MCF 10A (cell line): ENCODE measurements at regions of chr5 and their contacts with region 1.

Region 1: DNA sequence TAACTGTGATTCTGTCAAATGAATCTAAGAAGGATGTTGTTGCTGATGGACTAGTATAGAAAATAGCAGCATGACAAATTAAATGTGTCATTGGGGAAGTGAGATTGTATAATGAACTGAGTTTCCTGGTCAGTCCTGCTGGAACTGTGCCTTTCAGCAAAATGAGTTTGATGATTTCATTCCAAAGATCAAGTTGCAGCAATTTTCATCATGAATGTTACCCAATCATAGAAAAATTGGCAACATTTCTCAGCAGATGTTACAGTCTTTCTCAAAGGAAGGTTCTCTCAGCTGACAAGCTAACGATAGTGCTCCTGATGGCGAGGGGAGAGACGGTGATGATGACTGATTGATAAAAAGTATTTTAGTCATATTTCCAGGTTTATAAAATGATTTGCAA is 10.7 kb downstream of the PCDHAC2 start:
- DNase-seq: peak; percentile 86
- H3K4me3 Mint-ChIP-seq: peak overlapping the region; percentile 32
- H3K27ac Mint-ChIP-seq: peak overlapping the region; percentile 94
- H3K4me1 Mint-ChIP-seq: peaks cover 37% of the 10 kb centered on the region
- H3K27me3 Mint-ChIP-seq: no peaks in the 10 kb centered on the region
- CTCF ChIP-seq: no peak

Region 2: GRCh38 chr5:140710899-140711552 is 266.0 kb before region 1 on chr5:
- CTCF ChIA-PET with region 1: no interaction called
- POLR2A ChIA-PET with region 1: interaction called, 4 read pairs
- intact Hi-C with region 1: loop called (anchors 10 kb)
- DNase-seq: peak; percentile 99
- H3K4me3 Mint-ChIP-seq: peak overlapping the region; percentile 88
- H3K27ac Mint-ChIP-seq: peak overlapping the region; percentile 94
- H3K4me1 Mint-ChIP-seq: peaks cover 5% of the 10 kb centered on the region
- H3K27me3 Mint-ChIP-seq: no peaks in the 10 kb centered on the region
- CTCF ChIP-seq: no peak

Region 3: GRCh38 chr5:140953234-140953633 is 23.8 kb before region 1 on chr5:
- CTCF ChIA-PET with region 1: no interaction called
- POLR2A ChIA-PET with region 1: interaction called, 21 read pairs
- intact Hi-C with region 1: no loop called
- DNase-seq: no peak
- H3K4me3 Mint-ChIP-seq: no peak overlapping the region
- H3K27ac Mint-ChIP-seq: no peak overlapping the region
- H3K4me1 Mint-ChIP-seq: peaks cover 20% of the 10 kb centered on the region
- H3K27me3 Mint-ChIP-seq: no peaks in the 10 kb centered on the region
- CTCF ChIP-seq: no peak

Region 4: DNA sequence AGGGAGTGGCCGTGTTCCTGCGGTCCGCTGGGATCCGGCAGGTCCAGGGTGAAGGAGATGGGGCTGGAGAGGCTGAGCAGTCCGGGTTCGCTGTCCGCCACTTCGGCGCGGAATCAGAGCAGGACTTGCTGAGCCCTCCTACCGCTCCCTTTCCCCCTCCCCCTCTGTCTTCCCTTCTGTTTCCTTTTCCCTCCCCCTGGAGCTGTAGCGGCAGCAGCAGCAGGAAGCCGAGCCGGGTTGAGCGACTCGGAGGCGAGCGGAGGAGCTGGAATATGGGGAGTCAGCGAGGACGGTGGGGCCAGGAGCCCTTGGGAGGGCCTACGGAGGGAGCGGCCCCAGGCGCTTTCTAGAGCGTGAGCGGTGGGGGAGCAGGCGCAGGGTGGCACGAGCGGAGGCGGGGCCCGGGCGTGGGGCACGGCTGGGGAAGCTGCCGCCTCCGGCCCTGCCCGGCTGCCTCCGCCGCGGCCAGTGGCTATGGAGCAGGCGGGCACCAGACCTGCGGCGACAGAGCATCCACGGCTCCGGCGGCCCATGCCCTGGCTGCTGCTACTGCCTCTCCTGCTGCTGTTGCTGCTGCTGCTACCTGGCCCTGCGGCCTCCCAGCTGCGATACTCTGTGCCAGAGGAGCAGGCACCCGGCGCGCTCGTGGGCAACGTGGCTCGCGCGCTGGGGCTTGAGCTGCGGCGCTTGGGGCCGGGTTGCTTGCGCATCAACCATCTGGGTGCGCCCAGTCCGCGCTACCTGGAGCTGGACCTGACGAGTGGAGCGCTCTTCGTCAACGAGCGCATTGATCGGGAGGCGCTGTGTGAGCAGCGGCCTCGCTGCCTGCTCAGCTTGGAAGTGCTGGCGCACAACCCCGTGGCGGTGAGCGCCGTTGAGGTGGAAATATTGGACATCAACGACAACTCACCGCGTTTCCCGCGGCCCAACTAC is 10.4 kb before region 1 on chr5 and contains the start of gene PCDHAC2:
- CTCF ChIA-PET with region 1: interaction called, 4 read pairs
- POLR2A ChIA-PET with region 1: interaction called, 33 read pairs
- intact Hi-C with region 1: loop called (anchors 1 kb)
- DNase-seq: peak; percentile 55
- H3K4me3 Mint-ChIP-seq: peak within 1 kb of the TSS; percentile 94
- H3K27ac Mint-ChIP-seq: peak within 1 kb of the TSS; percentile 90
- H3K4me1 Mint-ChIP-seq: peaks cover 24% of the 10 kb centered on the region
- H3K27me3 Mint-ChIP-seq: no peaks in the 10 kb centered on the region
- CTCF ChIP-seq: no peak
- total RNA-seq, gene PCDHAC2: 9.3 and 12.3 TPM in 2 replicates

Region 5: GRCh38 chr5:140988031-140988997 is 11.3 kb after region 1 on chr5:
- CTCF ChIA-PET with region 1: interaction called, 15 read pairs
- POLR2A ChIA-PET with region 1: interaction called, 41 read pairs
- intact Hi-C with region 1: no loop called
- DNase-seq: peak; percentile 59
- H3K4me3 Mint-ChIP-seq: no peak overlapping the region
- H3K27ac Mint-ChIP-seq: no peak overlapping the region
- H3K4me1 Mint-ChIP-seq: peaks cover 13% of the 10 kb centered on the region
- H3K27me3 Mint-ChIP-seq: no peaks in the 10 kb centered on the region
- CTCF ChIP-seq: no peak

Region 6: GRCh38 chr5:141052561-141052960 is 75.6 kb after region 1 on chr5:
- CTCF ChIA-PET with region 1: no interaction called
- POLR2A ChIA-PET with region 1: no interaction called
- intact Hi-C with region 1: no loop called
- DNase-seq: no peak
- H3K4me3 Mint-ChIP-seq: no peak overlapping the region
- H3K27ac Mint-ChIP-seq: no peak overlapping the region
- H3K4me1 Mint-ChIP-seq: peaks cover 10% of the 10 kb centered on the region
- H3K27me3 Mint-ChIP-seq: no peaks in the 10 kb centered on the region
- CTCF ChIP-seq: no peak

Region 7: DNA sequence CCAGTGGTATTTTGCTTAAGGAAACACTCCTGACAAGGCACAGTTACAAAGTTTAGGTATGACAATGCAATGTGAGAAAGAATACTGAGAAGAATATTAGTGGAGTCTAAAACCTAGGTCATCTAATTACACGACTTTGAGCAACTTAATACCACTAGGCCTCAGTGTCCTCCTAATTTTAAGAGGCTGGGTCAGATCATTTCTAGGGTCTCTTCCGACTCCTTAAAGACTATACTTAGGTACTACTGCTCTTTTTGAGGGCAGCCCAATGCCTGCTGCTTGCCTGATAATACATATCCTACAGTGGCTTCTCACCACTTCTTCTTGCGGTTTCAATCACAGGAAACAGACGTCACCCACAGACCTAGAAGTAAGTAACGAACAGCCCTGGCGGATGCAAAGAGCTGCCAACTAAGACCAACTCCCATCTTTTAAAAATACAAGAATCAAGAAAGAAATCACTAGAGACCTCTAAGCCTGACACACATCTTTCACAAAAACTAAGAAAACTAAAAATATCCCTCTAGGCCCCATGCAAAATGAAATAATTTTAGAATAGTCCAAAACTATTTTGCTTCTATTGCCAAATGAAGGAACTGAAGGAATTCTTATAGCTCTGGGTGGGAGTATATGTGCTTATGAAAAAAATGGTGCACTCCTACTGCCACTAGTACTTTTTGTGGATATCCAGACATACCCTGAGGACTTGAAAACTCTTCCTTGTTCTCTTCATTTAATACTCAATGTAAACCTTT is 628.7 kb after region 1 on chr5:
- CTCF ChIA-PET with region 1: no interaction called
- POLR2A ChIA-PET with region 1: no interaction called
- intact Hi-C with region 1: loop called (anchors 10 kb)
- DNase-seq: peak; percentile 63
- H3K4me3 Mint-ChIP-seq: peak overlapping the region; percentile 17
- H3K27ac Mint-ChIP-seq: peak overlapping the region; percentile 98
- H3K4me1 Mint-ChIP-seq: peaks cover 44% of the 10 kb centered on the region
- H3K27me3 Mint-ChIP-seq: no peaks in the 10 kb centered on the region
- CTCF ChIP-seq: no peak